Activated CD4-positive, alpha-beta memory T cell treated with anti-CD3 and anti-CD28 coated beads for 36 hours (primary cell): ENCODE measurements at regions of chr9 and their contacts with region 1.

Region 1: GRCh38 chr9:34665381-34666250 is 3.2 kb upstream of the CCL27 start:
- DNase-seq: peak; percentile 93
- H3K4me3 Mint-ChIP-seq: peak overlapping the region; percentile 78
- H3K27ac Mint-ChIP-seq: peak overlapping the region; percentile 85
- H3K4me1 Mint-ChIP-seq: peaks cover 47% of the 10 kb centered on the region
- H3K27me3 Mint-ChIP-seq: no peaks in the 10 kb centered on the region

Region 2: GRCh38 chr9:34458013-34458958 is 207.3 kb before region 1 on chr9 and contains the starts of genes DNAI1 and FAM219A:
- CTCF ChIA-PET with region 1: interaction called, 4 read pairs
- POLR2A ChIA-PET with region 1: no interaction called
- intact Hi-C with region 1: loop called (anchors 1 kb)
- DNase-seq: peak; percentile 99
- H3K4me3 Mint-ChIP-seq: peak within 1 kb of the TSS; percentile 86
- H3K27ac Mint-ChIP-seq: no peak within 1 kb of the TSS
- H3K4me1 Mint-ChIP-seq: peaks cover 40% of the 10 kb centered on the region
- H3K27me3 Mint-ChIP-seq: peaks cover 5% of the 10 kb centered on the region
- total RNA-seq, gene DNAI1: 0.19 to 0.69 TPM
- total RNA-seq, gene FAM219A: 13.3 to 13.8 TPM

Region 3: GRCh38 chr9:34637356-34638137 is 28.1 kb before region 1 on chr9 and contains the start of gene SIGMAR1:
- CTCF ChIA-PET with region 1: interaction called, 16 read pairs
- POLR2A ChIA-PET with region 1: interaction called, 5 read pairs
- intact Hi-C with region 1: no loop called
- DNase-seq: peak; percentile 94
- H3K4me3 Mint-ChIP-seq: peak within 1 kb of the TSS; percentile 94
- H3K27ac Mint-ChIP-seq: peak within 1 kb of the TSS; percentile 80
- H3K4me1 Mint-ChIP-seq: peaks cover 41% of the 10 kb centered on the region
- H3K27me3 Mint-ChIP-seq: no peaks in the 10 kb centered on the region
- total RNA-seq, gene SIGMAR1: 65.9 to 67.6 TPM

Region 4: DNA sequence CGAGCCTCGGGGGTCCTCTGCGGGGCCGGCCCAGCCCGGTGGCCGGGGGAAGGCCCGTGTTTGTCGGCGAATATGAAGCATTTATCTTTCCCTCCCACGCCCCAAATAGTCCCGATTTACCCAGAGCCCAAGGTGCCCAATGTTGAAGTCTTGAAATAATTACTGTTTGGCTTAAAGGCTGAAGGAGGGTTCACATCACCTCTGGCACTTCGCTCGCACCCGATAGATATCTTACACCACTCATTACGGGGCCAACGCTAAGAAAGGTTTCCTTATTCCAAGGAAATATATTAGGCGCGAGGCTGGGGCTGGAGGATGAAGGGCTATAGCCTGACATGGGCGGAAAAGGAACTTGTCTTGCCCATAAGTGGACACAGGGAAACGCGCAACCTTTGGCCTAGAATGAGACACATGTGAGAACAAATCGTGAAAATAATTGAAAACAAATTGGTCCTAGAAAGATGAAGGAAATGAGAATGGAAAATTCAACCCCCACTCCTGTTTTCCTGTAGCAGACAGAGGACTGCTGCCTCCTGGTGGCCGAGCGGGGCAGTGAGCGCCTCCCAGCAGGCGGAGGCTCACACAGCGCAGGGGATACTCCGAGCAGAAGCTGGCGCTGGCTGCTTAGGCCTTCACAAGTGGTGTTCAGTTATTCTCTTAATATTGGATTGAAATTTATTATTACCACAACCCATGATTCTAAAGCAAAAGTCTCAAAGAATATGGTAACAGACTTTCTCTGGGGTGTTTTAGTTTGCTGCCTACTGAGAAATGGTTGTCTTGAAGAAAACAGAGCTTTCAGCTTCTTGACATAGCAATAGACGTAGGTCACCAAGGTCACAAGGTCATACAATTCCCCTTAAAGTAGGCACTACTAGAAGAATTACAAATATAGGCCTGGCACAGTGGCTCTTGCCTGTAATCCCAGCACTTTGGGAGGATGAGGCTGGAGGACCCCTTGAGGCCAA is 36.4 kb after region 1 on chr9:
- CTCF ChIA-PET with region 1: interaction called, 46 read pairs
- POLR2A ChIA-PET with region 1: interaction called, 3 read pairs
- intact Hi-C with region 1: loop called (anchors 2 kb)
- DNase-seq: peak; percentile 89
- H3K4me3 Mint-ChIP-seq: peak overlapping the region; percentile 77
- H3K27ac Mint-ChIP-seq: peak overlapping the region; percentile 38
- H3K4me1 Mint-ChIP-seq: peaks cover 2% of the 10 kb centered on the region
- H3K27me3 Mint-ChIP-seq: peaks cover 2% of the 10 kb centered on the region

Region 5: DNA sequence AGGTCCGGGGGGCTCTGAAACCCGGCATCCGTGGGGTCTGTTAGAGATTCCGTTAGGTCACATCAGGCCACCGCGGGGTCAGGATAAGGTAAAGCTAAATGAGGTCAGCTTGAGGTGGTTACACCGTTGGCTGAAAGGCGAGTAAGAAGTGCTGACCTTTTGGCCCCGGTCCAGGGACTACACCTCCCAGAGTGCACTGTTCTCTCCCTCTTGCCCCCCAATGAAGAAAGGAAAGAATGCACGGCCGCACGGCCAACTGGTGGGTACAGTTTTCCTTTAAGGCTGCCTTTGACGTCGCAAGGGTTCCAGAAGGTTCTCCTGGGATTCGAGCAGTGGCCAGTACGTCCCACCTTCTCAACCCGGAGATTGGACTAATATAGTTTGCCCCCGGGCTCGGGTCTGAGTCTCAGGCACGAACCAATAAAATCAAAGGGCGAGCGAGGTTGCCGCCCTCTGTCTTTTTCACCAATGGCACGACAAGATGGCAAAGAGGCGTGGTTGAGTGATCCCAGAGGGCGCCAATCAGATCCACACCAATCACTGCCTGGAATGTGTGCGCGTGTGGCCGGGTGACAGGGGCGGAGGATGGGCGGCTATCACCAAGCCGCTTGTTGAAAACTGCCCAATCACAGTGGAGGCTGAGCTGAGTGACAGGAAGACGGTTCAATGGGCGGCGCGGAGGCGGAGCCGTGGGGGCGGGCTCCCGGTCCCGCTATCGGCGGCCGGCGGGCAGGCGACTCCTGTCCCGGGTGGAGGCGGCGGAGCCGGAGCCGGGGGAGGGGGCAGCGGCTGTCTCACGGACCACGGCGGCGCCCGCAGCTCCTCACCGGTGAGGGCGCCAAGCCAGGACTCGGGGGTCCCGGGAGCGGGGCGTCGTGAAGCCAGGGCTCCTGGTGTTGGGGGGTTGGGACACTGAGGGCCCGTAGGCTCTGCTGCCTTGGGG is 323.7 kb after region 1 on chr9 and contains the start of gene DNAJB5:
- CTCF ChIA-PET with region 1: no interaction called
- POLR2A ChIA-PET with region 1: no interaction called
- intact Hi-C with region 1: loop called (anchors 2 kb)
- DNase-seq: peak; percentile 99
- H3K4me3 Mint-ChIP-seq: peak within 1 kb of the TSS; percentile 89
- H3K27ac Mint-ChIP-seq: peak within 1 kb of the TSS; percentile 89
- H3K4me1 Mint-ChIP-seq: peaks cover 81% of the 10 kb centered on the region
- H3K27me3 Mint-ChIP-seq: no peaks in the 10 kb centered on the region
- total RNA-seq, gene DNAJB5: 11.5 to 12.0 TPM